Activated T-helper 1 cell treated with anti-CD3 and anti-CD28 coated beads, Interleukin-12 subunit alpha, Interleukin-12 subunit beta, Interleukin-2, Interleukin-4 antibody, amounts not matched to agents 30 ng/mL and 10 ng/mL and 1 ng/mL, durations not matched to agents 14 hours and 24 hours and 36 hours (primary cell): ENCODE measurements at regions of chr10 and their contacts with region 1.

Region 1: DNA sequence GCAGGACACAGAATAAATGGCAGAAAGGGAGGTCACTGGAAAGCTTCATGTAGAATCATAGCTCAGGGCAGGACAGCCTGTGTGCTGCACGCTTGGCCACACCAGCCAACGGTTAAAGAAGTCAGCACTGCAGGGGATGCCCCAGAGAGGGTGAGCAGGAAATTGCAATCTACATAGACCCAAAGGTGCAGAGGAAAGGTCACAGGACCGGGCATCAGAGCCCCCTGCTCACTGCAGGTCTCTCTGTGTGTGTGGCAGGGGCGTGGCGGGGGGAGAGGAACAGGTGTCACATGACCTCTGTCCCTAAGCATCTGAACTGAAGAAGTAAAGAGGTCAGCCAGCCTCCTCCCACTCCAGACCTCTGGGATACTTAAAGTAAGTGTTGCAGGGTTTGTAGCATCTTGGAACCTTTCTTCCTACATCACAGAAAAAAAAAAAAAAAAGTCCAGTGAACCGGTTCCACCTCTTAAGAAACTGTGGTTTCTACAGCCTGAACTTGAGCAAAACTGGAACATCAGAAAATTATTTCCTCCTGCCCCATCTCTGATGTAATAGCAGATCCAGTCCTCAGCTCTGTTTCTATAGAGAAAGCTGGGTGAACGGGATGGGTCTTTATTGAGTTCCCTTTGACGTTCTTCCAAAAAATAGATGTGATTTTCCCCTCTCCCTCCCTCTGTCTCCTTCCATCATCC is 64.3 kb downstream of the RGS10 start:
- DNase-seq: peak; percentile 25
- H3K4me3 Mint-ChIP-seq: peak overlapping the region; percentile 66
- H3K27ac Mint-ChIP-seq: peak overlapping the region; percentile 88
- H3K4me1 Mint-ChIP-seq: peaks cover 34% of the 10 kb centered on the region
- H3K27me3 Mint-ChIP-seq: peaks cover 1% of the 10 kb centered on the region

Region 2: GRCh38 chr10:119489991-119490326 is 11.7 kb after region 1 on chr10:
- intact Hi-C with region 1: loop called (anchors 1 kb)
- DNase-seq: no peak
- H3K4me3 Mint-ChIP-seq: peak overlapping the region; percentile 34
- H3K27ac Mint-ChIP-seq: peak overlapping the region; percentile 89
- H3K4me1 Mint-ChIP-seq: peaks cover 38% of the 10 kb centered on the region
- H3K27me3 Mint-ChIP-seq: no peaks in the 10 kb centered on the region

Region 3: GRCh38 chr10:119496273-119496672 is 18.0 kb after region 1 on chr10:
- intact Hi-C with region 1: loop called (anchors 1 kb)
- DNase-seq: no peak
- H3K4me3 Mint-ChIP-seq: peak overlapping the region; percentile 64
- H3K27ac Mint-ChIP-seq: peak overlapping the region; percentile 87
- H3K4me1 Mint-ChIP-seq: peaks cover 79% of the 10 kb centered on the region
- H3K27me3 Mint-ChIP-seq: no peaks in the 10 kb centered on the region

Region 4: GRCh38 chr10:119517235-119518141 is 39.2 kb after region 1 on chr10:
- intact Hi-C with region 1: loop called (anchors 1 kb)
- DNase-seq: peak; percentile 55
- H3K4me3 Mint-ChIP-seq: peak overlapping the region; percentile 54
- H3K27ac Mint-ChIP-seq: peak overlapping the region; percentile 82
- H3K4me1 Mint-ChIP-seq: peaks cover 53% of the 10 kb centered on the region
- H3K27me3 Mint-ChIP-seq: no peaks in the 10 kb centered on the region